CD8-positive, alpha-beta memory T cell (primary cell): ENCODE measurements at regions of chr22 and their contacts with region 1.

Region 1: GRCh38 chr22:41832553-41833368 is at the start of gene SREBF2:
- DNase-seq: peak; percentile 97 to 99 (median 98)
- H3K4me3 ChIP-seq: peak within 1 kb of the TSS; percentile 99
- H3K4me3 Mint-ChIP-seq: peak within 1 kb of the TSS; percentile 95 to 99 (median 97)
- H3K27ac ChIP-seq: peak within 1 kb of the TSS; percentile 97
- H3K27ac Mint-ChIP-seq: peak within 1 kb of the TSS; percentile 98 to 100 (median 99)
- H3K4me1 ChIP-seq: peaks cover 24% of the 10 kb centered on the region
- H3K4me1 Mint-ChIP-seq: peaks cover 21 to 46% (median 35%) of the 10 kb centered on the region in 3 donors
- H3K27me3 ChIP-seq: no peaks in the 10 kb centered on the region
- H3K27me3 Mint-ChIP-seq: no peaks in the 10 kb centered on the region
- total RNA-seq, gene SREBF2: 85.1 to 87.1 TPM

Region 2: GRCh38 chr22:41688365-41689211 is 144.2 kb before region 1 on chr22 and contains the start of gene SNU13:
- CTCF ChIA-PET with region 1: no interaction called
- POLR2A ChIA-PET with region 1: interaction called, 10 read pairs
- DNase-seq: peak; percentile 90 to 94 (median 91)
- H3K4me3 ChIP-seq: peak within 1 kb of the TSS; percentile 89
- H3K4me3 Mint-ChIP-seq: peak within 1 kb of the TSS; percentile 92 to 98 (median 95)
- H3K27ac ChIP-seq: peak within 1 kb of the TSS; percentile 98
- H3K27ac Mint-ChIP-seq: peak within 1 kb of the TSS; percentile 92 to 99 (median 98)
- H3K4me1 ChIP-seq: peaks cover 13% of the 10 kb centered on the region
- H3K4me1 Mint-ChIP-seq: peaks cover 25 to 47% (median 37%) of the 10 kb centered on the region in 3 donors
- H3K27me3 ChIP-seq: no peaks in the 10 kb centered on the region
- H3K27me3 Mint-ChIP-seq: no peaks in the 10 kb centered on the region
- total RNA-seq, gene SNU13: 315 to 324 TPM

Region 3: GRCh38 chr22:41746567-41747400 is 86.0 kb before region 1 on chr22:
- CTCF ChIA-PET with region 1: interaction called, 10 read pairs
- POLR2A ChIA-PET with region 1: no interaction called
- DNase-seq: peak; percentile 26 to 70 (median 40)
- H3K4me3 ChIP-seq: no peak overlapping the region
- H3K4me3 Mint-ChIP-seq: no peak overlapping the region
- H3K27ac ChIP-seq: no peak overlapping the region
- H3K27ac Mint-ChIP-seq: peak overlapping the region in 3 of 8 donors; percentile 26 to 38 (median 38)
- H3K4me1 ChIP-seq: no peaks in the 10 kb centered on the region
- H3K4me1 Mint-ChIP-seq: peaks cover 0 to 4% (median 3%) of the 10 kb centered on the region in 3 donors
- H3K27me3 ChIP-seq: no peaks in the 10 kb centered on the region
- H3K27me3 Mint-ChIP-seq: peaks cover 3 to 28% of the 10 kb centered on the region in 2 donors

Region 4: GRCh38 chr22:41762980-41763779 is 69.6 kb before region 1 on chr22:
- CTCF ChIA-PET with region 1: no interaction called
- POLR2A ChIA-PET with region 1: no interaction called
- DNase-seq: peak in 3 of 5 donors; percentile 7 to 18 (median 17)
- H3K4me3 ChIP-seq: no peak overlapping the region
- H3K4me3 Mint-ChIP-seq: no peak overlapping the region
- H3K27ac ChIP-seq: no peak overlapping the region
- H3K27ac Mint-ChIP-seq: peak overlapping the region in 1 of 8 donors; percentile 30
- H3K4me1 ChIP-seq: no peaks in the 10 kb centered on the region
- H3K4me1 Mint-ChIP-seq: no peaks in the 10 kb centered on the region
- H3K27me3 ChIP-seq: no peaks in the 10 kb centered on the region
- H3K27me3 Mint-ChIP-seq: no peaks in the 10 kb centered on the region

Region 5: DNA sequence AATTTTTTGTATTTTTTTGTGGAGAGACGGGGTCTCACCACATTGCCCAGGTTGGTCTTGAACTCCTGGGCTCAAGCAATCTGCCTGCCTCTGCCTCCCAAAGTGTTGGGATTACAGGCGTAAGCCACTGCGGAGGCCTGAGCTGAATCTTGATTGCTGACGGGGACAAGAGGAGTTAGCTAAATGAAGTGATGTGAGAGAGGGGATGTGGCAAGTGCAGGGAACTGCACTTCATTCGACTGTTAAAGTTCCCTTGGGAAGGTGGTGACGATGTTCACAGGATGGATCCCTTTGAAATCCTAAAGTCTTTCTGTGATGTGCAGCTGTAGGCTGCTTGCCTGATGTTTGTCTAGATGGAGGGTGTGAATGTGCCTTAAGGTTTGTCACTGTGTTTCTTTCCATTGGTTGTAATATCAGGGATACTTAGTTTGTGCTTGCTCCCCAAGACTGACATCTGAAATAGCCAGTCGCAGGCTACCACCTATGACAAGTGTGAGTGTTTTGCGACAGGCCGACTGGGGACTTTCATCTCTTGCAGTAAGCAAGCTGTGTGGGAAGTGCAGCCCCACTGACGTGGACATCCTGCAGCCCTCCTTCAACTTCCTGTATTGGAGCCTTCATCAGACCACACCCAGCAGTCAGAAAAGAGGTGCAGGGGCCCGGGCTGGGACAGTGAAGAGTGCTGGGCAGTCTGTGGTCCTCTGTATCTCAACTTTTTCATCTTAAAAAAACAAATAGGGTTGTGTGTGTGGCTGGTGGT is 51.8 kb before region 1 on chr22:
- CTCF ChIA-PET with region 1: interaction called, 4 read pairs
- POLR2A ChIA-PET with region 1: interaction called, 15 read pairs
- DNase-seq: peak; percentile 83 to 96 (median 93)
- H3K4me3 ChIP-seq: peak overlapping the region; percentile 78
- H3K4me3 Mint-ChIP-seq: peak overlapping the region; percentile 76 to 92 (median 90)
- H3K27ac ChIP-seq: peak overlapping the region; percentile 71
- H3K27ac Mint-ChIP-seq: peak overlapping the region; percentile 97 to 100 (median 100)
- H3K4me1 ChIP-seq: peaks cover 44% of the 10 kb centered on the region
- H3K4me1 Mint-ChIP-seq: peaks cover 38 to 54% (median 50%) of the 10 kb centered on the region in 3 donors
- H3K27me3 ChIP-seq: no peaks in the 10 kb centered on the region
- H3K27me3 Mint-ChIP-seq: no peaks in the 10 kb centered on the region

Region 6: GRCh38 chr22:41925655-41926460 is 93.1 kb after region 1 on chr22:
- CTCF ChIA-PET with region 1: interaction called, 5 read pairs
- POLR2A ChIA-PET with region 1: interaction called, 11 read pairs
- DNase-seq: peak; percentile 75 to 86 (median 78)
- H3K4me3 ChIP-seq: peak overlapping the region; percentile 34
- H3K4me3 Mint-ChIP-seq: peak overlapping the region; percentile 82 to 91 (median 85)
- H3K27ac ChIP-seq: no peak overlapping the region
- H3K27ac Mint-ChIP-seq: peak overlapping the region in 6 of 8 donors; percentile 65 to 87 (median 78)
- H3K4me1 ChIP-seq: peaks cover 10% of the 10 kb centered on the region
- H3K4me1 Mint-ChIP-seq: peaks cover 4 to 34% (median 9%) of the 10 kb centered on the region in 3 donors
- H3K27me3 ChIP-seq: no peaks in the 10 kb centered on the region
- H3K27me3 Mint-ChIP-seq: peaks cover 3 to 6% of the 10 kb centered on the region in 2 donors

Region 7: DNA sequence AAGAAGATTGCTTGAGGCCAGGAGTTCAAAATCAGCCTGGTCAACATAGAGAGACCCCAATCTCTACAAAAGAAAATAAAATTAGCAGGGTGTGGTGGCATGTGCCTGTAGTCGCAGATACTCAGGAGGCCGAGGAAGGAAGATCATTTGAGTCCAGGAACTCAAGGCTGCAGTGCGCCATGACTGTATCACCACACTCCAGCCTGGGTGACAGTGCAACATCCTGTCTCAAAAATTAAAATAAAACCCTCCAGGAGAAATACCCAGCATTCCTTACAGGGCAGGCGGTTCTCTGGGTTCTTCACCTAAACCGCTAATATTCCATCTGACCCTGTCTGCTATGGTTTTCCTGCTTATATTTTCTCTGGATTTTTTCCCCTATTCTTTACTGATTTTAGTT is 424.2 kb after region 1 on chr22:
- CTCF ChIA-PET with region 1: no interaction called
- POLR2A ChIA-PET with region 1: no interaction called
- DNase-seq: no peak
- H3K4me3 ChIP-seq: no peak overlapping the region
- H3K4me3 Mint-ChIP-seq: peak overlapping the region in 2 of 7 donors; percentile 29 to 40
- H3K27ac ChIP-seq: no peak overlapping the region
- H3K27ac Mint-ChIP-seq: peak overlapping the region in 7 of 8 donors; percentile 2 to 77 (median 23)
- H3K4me1 ChIP-seq: peaks cover 46% of the 10 kb centered on the region
- H3K4me1 Mint-ChIP-seq: peaks cover 64 to 77% (median 74%) of the 10 kb centered on the region in 3 donors
- H3K27me3 ChIP-seq: no peaks in the 10 kb centered on the region
- H3K27me3 Mint-ChIP-seq: no peaks in the 10 kb centered on the region